GM12878 (cell line): ENCODE measurements at regions of chr2 and their contacts with region 1.

Region 1: GRCh38 chr2:143034292-143035074 is 94.7 kb upstream of the ARHGAP15 start:
- DNase-seq: peak; percentile 53
- ATAC-seq: peak; percentile 86
- H3K4me3 ChIP-seq: no peak overlapping the region
- H3K27ac ChIP-seq: no peak overlapping the region
- H3K4me1 ChIP-seq: no peaks in the 10 kb centered on the region
- H3K27me3 ChIP-seq: no peaks in the 10 kb centered on the region
- CTCF ChIP-seq: peak; percentile 78 to 98 (median 93); a peak in 5 of 6 replicates
- EP300 ChIP-seq: no peak
- POLR2A ChIP-seq: no peak
- RAD21 ChIP-seq: peak; percentile 78

Region 2: GRCh38 chr2:142398212-142398611 is 636.3 kb before region 1 on chr2:
- CTCF ChIA-PET with region 1: no interaction called
- POLR2A ChIA-PET with region 1: no interaction called
- RAD21 ChIA-PET with region 1: no interaction called
- SMC1A ChIA-PET with region 1: no interaction called
- in situ Hi-C with region 1: no loop called
- intact Hi-C with region 1: no loop called
- DNase-seq: no peak
- ATAC-seq: no peak
- H3K4me3 ChIP-seq: no peak overlapping the region
- H3K27ac ChIP-seq: no peak overlapping the region
- H3K4me1 ChIP-seq: no peaks in the 10 kb centered on the region
- H3K27me3 ChIP-seq: no peaks in the 10 kb centered on the region
- CTCF ChIP-seq: no peak
- EP300 ChIP-seq: no peak
- POLR2A ChIP-seq: no peak
- RAD21 ChIP-seq: no peak

Region 3: GRCh38 chr2:143051465-143051864 is 17.0 kb after region 1 on chr2:
- CTCF ChIA-PET with region 1: interaction called, 16 read pairs
- POLR2A ChIA-PET with region 1: no interaction called
- RAD21 ChIA-PET with region 1: no interaction called
- SMC1A ChIA-PET with region 1: no interaction called
- in situ Hi-C with region 1: no loop called
- intact Hi-C with region 1: no loop called
- DNase-seq: no peak
- ATAC-seq: peak; percentile 38
- H3K4me3 ChIP-seq: no peak overlapping the region
- H3K27ac ChIP-seq: no peak overlapping the region
- H3K4me1 ChIP-seq: no peaks in the 10 kb centered on the region
- H3K27me3 ChIP-seq: no peaks in the 10 kb centered on the region
- CTCF ChIP-seq: no peak
- EP300 ChIP-seq: no peak
- POLR2A ChIP-seq: no peak
- RAD21 ChIP-seq: no peak

Region 4: DNA sequence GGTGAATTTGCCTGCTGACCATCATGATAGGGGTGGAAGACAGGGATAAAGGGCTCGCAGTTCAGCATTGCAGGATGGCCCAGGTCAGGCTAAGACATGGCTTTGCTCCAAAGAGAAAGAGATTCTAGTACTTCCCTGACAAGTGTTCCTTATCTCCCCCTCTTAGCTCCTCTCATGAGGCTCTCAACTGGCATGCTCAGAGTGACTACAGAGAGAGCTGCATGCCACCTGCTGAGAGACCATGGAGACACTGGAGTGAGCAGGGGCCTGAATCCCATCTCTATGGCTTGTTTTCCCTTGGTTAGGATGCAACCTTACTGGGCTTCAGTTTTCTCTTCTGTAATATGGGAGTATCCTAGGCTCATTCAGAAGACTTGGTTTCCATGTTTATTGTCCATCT is 189.1 kb after region 1 on chr2:
- CTCF ChIA-PET with region 1: interaction called, 13 read pairs
- POLR2A ChIA-PET with region 1: no interaction called
- RAD21 ChIA-PET with region 1: no interaction called
- SMC1A ChIA-PET with region 1: interaction called, 4 read pairs
- in situ Hi-C with region 1: no loop called
- intact Hi-C with region 1: loop called (anchors 5 kb)
- DNase-seq: no peak
- ATAC-seq: no peak
- H3K4me3 ChIP-seq: no peak overlapping the region
- H3K27ac ChIP-seq: no peak overlapping the region
- H3K4me1 ChIP-seq: no peaks in the 10 kb centered on the region
- H3K27me3 ChIP-seq: no peaks in the 10 kb centered on the region
- CTCF ChIP-seq: no peak
- EP300 ChIP-seq: no peak
- POLR2A ChIP-seq: no peak
- RAD21 ChIP-seq: no peak

Region 5: DNA sequence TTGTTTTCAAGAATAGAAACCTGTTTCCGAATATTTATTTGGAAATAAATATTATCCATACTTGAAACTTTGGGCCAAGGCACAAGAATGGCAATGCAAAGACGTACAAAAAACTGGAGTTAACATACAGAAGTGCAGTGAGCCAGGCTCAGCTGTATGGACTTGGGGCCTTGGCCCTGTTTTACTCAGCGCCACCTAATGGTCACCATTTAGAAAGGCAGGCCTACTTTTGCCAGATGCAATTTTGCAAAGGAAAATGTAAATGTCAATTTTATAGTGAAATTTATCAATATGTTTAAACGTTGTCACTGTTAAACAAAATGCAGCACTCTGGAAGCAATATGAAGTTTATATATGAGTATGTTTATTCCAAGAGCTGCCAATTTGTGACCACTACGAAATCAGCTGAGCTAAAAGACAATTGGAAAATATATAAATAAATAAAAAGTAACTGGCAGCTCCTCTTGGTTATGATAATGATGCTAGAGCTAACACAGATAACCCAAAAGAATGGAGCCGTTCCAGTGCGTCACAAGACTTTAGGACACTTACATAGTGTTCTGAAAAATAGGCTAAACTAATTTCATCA is 249.7 kb after region 1 on chr2:
- CTCF ChIA-PET with region 1: interaction called, 17 read pairs
- POLR2A ChIA-PET with region 1: no interaction called
- RAD21 ChIA-PET with region 1: interaction called, 4 read pairs
- SMC1A ChIA-PET with region 1: no interaction called
- in situ Hi-C with region 1: no loop called
- intact Hi-C with region 1: no loop called
- DNase-seq: no peak
- ATAC-seq: peak; percentile 88
- H3K4me3 ChIP-seq: no peak overlapping the region
- H3K27ac ChIP-seq: no peak overlapping the region
- H3K4me1 ChIP-seq: no peaks in the 10 kb centered on the region
- H3K27me3 ChIP-seq: no peaks in the 10 kb centered on the region
- CTCF ChIP-seq: peak; percentile 57 to 85 (median 77)
- EP300 ChIP-seq: no peak
- POLR2A ChIP-seq: no peak
- RAD21 ChIP-seq: peak; percentile 35; the same call in 1 of the 2 replicates